Activated T-helper 1 cell treated with anti-CD3 and anti-CD28 coated beads, Interleukin-12 subunit alpha, Interleukin-12 subunit beta, Interleukin-2, Interleukin-4 antibody, amounts not matched to agents 30 ng/mL and 10 ng/mL and 1 ng/mL, durations not matched to agents 14 hours and 24 hours and 36 hours (primary cell): ENCODE measurements at regions of chr11 and their contacts with region 1.

Region 1: DNA sequence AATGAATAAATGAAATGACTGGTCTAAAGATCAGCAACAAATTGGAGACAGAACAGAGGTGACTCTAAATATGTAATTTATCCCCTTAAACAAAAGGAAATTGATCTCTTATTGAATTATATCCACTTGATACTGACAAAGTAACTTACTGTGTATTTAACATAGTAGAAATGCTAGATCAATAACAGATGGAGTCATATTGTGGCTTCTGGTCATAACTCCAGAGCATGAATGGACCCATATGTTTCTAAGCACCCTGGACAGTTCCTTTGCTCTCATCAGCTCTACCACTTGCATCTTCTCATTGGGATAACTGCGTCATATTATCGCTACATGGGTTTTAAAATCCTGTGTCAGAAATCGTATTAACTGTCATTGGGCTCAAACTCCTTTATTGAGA is 222.3 kb downstream of the ETS1 start:
- DNase-seq: no peak
- H3K4me3 Mint-ChIP-seq: no peak overlapping the region
- H3K27ac Mint-ChIP-seq: no peak overlapping the region
- H3K4me1 Mint-ChIP-seq: peaks cover 10% of the 10 kb centered on the region
- H3K27me3 Mint-ChIP-seq: peaks cover 2% of the 10 kb centered on the region

Region 2: DNA sequence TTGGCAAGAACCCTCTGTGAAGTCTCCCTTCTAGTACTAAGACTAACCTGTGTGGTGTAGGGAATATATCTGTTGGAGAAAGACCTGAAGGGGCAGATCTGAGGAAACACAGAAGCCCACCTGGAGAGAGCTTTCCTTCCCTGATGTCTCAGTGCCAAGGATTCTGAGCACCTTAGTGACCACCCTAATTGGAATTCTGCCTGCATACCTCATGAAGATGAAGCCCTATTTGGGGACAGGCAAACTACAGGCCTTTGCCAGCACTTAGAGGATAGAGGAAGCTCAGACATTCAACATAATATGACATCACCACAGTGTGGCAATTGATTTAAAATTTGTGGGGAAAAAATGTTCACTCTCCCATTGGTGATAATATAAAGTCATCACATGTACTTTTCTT is 598.3 kb before region 1 on chr11:
- intact Hi-C with region 1: loop called (anchors 5 kb)
- DNase-seq: no peak
- H3K4me3 Mint-ChIP-seq: no peak overlapping the region
- H3K27ac Mint-ChIP-seq: no peak overlapping the region
- H3K4me1 Mint-ChIP-seq: no peaks in the 10 kb centered on the region
- H3K27me3 Mint-ChIP-seq: no peaks in the 10 kb centered on the region

Region 3: DNA sequence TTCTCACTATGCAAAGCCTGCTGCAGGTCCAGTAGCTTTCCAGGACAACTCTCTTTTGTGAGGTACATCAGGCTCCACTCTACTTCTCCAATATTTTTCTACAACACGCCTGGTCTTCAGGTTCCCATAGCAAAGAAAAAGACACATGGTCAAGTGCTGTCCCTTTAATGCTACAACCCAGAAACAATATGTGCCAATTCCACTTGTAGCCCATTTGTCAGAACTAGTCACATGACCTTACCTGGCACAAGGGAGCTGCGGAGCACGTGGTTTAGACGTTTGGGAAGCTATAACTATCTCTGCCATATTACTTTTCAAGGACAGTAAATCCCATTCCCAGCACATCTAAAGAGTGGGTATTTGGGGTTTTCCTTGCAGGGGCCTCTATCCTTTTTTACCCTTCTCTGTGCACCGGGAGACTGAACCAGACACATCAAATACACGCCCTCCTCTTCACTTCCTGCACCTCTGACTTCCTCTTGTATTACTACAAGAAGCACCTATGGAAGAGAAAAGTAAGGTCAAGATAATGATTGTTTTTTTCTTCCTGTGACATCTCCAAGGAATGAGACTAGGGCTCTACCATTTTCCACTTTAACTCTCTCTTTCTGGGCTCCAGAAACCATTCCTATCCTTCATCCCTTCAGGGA is 15.3 kb before region 1 on chr11:
- intact Hi-C with region 1: loop called (anchors 2 kb)
- DNase-seq: no peak
- H3K4me3 Mint-ChIP-seq: peak overlapping the region; percentile 34
- H3K27ac Mint-ChIP-seq: peak overlapping the region; percentile 46
- H3K4me1 Mint-ChIP-seq: peaks cover 68% of the 10 kb centered on the region
- H3K27me3 Mint-ChIP-seq: no peaks in the 10 kb centered on the region

Region 4: DNA sequence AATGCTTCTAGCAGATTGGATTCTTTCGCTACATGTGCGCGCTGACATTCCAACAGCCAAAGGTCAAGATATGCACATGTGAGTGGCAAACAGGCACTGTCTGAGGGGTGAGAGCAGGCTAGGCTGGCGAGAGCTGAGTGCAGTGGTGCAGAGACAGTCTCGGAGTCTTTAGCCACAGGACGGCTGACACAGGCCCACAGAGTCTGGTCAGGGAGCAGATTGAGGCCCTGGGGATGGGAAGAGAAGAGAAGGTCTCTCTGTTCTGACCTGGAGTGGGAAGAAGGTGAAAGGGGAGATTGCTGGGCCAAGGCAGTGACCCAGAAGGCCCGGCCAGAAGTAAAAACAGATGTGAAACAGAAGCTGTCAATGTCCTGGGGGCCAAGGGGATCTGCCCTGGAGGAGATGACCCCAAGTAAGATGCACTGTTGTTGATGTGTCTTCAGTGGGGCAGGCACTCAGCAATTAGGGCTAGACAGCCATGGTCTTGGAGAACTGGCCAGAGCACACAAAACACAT is 24.5 kb after region 1 on chr11:
- intact Hi-C with region 1: no loop called
- DNase-seq: no peak
- H3K4me3 Mint-ChIP-seq: no peak overlapping the region
- H3K27ac Mint-ChIP-seq: no peak overlapping the region
- H3K4me1 Mint-ChIP-seq: peaks cover 21% of the 10 kb centered on the region
- H3K27me3 Mint-ChIP-seq: no peaks in the 10 kb centered on the region